CD4-positive, alpha-beta memory T cell (primary cell): ENCODE measurements at regions of chrX and their contacts with region 1.

Region 1: GRCh38 chrX:120697053-120697452 is 67.2 kb upstream of the C1GALT1C1 start:
- DNase-seq: peak; percentile 41 to 66 (median 59)
- H3K4me3 ChIP-seq: no peak overlapping the region
- H3K4me3 Mint-ChIP-seq: peak overlapping the region in 5 of 8 donors; percentile 51 to 72 (median 53)
- H3K27ac ChIP-seq: no peak overlapping the region
- H3K27ac Mint-ChIP-seq: peak overlapping the region; percentile 79 to 94 (median 89)
- H3K4me1 ChIP-seq: peaks cover 17% of the 10 kb centered on the region
- H3K4me1 Mint-ChIP-seq: peaks cover 12 to 20% (median 14%) of the 10 kb centered on the region in 4 donors
- H3K27me3 ChIP-seq: no peaks in the 10 kb centered on the region
- H3K27me3 Mint-ChIP-seq: no peaks in the 10 kb centered on the region

Region 2: DNA sequence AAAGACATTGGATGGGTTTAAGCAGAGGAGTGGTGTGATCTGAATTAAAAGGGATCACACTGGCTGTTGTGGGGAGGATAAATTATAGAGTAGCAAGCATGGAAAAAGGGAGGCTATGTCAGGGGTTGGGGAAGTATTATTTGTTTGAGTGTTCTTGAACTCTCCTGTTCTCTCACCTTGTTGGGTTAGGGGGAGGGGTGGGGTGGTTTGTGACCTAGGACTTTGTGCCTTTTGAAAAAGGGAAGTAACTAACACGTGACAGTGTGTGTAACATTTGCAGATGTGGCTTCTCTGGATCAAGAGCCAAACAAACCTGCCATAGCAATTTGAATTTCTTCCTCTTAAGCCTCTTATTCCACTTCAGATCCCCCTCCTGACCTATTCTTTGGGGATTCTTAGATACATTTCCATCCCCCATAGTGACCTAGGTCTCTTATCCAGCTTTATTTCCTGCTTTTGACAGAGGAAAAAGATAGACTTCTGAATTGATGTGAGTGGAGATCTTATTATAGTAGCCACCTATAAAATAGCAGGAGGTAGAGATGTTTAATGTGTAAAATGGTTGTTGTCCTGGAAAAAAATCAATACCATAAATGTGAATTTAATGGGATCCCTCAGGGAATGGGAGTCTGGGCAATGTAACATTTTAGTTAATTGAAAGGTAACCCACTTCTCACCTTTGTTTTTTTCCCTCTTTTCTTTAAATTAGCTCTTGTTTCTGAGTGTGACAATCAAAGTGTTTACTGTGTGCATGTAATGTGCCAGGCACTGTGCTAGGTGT is 58.2 kb after region 1 on chrX:
- CTCF ChIA-PET with region 1: no interaction called
- POLR2A ChIA-PET with region 1: no interaction called
- intact Hi-C with region 1: loop called (anchors 10 kb)
- DNase-seq: peak in 3 of 5 donors; percentile 5 to 24 (median 15)
- H3K4me3 ChIP-seq: no peak overlapping the region
- H3K4me3 Mint-ChIP-seq: peak overlapping the region in 4 of 8 donors; percentile 5 to 39 (median 16)
- H3K27ac ChIP-seq: no peak overlapping the region
- H3K27ac Mint-ChIP-seq: peak overlapping the region in 3 of 7 donors; percentile 1 to 46 (median 10)
- H3K4me1 ChIP-seq: peaks cover 25% of the 10 kb centered on the region
- H3K4me1 Mint-ChIP-seq: peaks cover 14 to 36% (median 28%) of the 10 kb centered on the region in 4 donors
- H3K27me3 ChIP-seq: no peaks in the 10 kb centered on the region
- H3K27me3 Mint-ChIP-seq: no peaks in the 10 kb centered on the region